Activated CD8-positive, alpha-beta memory T cell treated with anti-CD3 and anti-CD28 coated beads, Interleukin-2, amount 10 ng/mL, durations not matched to agents 7 days and 5 days (primary cell): ENCODE measurements at regions of chr2 and their contacts with region 1.

Region 1: GRCh38 chr2:231925303-231926179 is 655 bp downstream of the NPPC start:
- DNase-seq: peak; percentile 73
- ATAC-seq: peak; percentile 73
- H3K4me3 Mint-ChIP-seq: peak overlapping the region; percentile 43
- H3K27ac Mint-ChIP-seq: no peak overlapping the region
- H3K4me1 Mint-ChIP-seq: peaks cover 9% of the 10 kb centered on the region
- H3K27me3 Mint-ChIP-seq: peaks cover 53% of the 10 kb centered on the region

Region 2: GRCh38 chr2:231900486-231900942 is 25.0 kb before region 1 on chr2:
- CTCF ChIA-PET with region 1: interaction called, 12 read pairs
- DNase-seq: peak; percentile 67
- ATAC-seq: peak; percentile 75
- H3K4me3 Mint-ChIP-seq: no peak overlapping the region
- H3K27ac Mint-ChIP-seq: no peak overlapping the region
- H3K4me1 Mint-ChIP-seq: no peaks in the 10 kb centered on the region
- H3K27me3 Mint-ChIP-seq: peaks cover 8% of the 10 kb centered on the region

Region 3: DNA sequence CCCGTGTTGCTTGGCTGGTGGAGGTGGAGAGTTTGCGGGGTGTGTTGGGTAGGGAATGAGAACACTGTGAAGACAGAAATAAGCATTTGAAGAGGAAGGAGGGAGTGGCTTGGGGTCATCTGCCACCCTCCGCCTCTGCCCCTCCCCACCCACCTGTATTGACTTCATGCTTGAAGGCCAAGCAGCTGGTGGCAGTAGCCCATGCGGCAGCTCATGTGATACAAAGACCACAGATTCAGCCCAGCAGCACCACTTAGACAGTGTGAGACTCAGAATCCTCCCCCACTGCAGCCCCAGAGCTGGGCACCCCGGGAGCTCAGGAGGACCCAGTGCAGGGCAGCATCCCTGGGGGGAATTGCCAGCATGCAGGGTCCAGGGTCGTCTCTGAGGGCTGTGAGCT is 14.8 kb before region 1 on chr2:
- CTCF ChIA-PET with region 1: interaction called, 11 read pairs
- DNase-seq: no peak
- ATAC-seq: no peak
- H3K4me3 Mint-ChIP-seq: no peak overlapping the region
- H3K27ac Mint-ChIP-seq: no peak overlapping the region
- H3K4me1 Mint-ChIP-seq: peaks cover 16% of the 10 kb centered on the region
- H3K27me3 Mint-ChIP-seq: peaks cover 12% of the 10 kb centered on the region

Region 4: DNA sequence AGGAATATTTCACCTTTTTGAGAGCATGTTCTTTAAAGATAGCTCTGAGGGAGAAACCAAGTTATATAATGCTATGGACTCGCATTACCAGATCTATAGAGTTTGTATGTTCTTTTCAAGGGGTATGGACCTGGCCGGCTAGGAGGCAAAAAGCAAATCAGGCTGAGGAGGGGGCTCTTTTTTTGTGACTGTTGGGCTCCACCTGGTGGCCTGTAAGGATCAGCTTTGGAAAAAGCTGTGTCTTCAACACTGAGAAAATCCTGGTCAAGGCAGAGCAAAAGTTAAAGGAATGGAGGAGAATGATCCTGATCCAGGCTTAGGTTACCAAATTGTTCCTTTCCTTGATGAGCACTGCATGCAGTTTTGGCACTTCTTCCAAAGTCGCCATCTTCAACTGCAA is 216.5 kb after region 1 on chr2:
- CTCF ChIA-PET with region 1: interaction called, 40 read pairs
- DNase-seq: no peak
- ATAC-seq: no peak
- H3K4me3 Mint-ChIP-seq: no peak overlapping the region
- H3K27ac Mint-ChIP-seq: no peak overlapping the region
- H3K4me1 Mint-ChIP-seq: peaks cover 13% of the 10 kb centered on the region
- H3K27me3 Mint-ChIP-seq: no peaks in the 10 kb centered on the region

Region 5: DNA sequence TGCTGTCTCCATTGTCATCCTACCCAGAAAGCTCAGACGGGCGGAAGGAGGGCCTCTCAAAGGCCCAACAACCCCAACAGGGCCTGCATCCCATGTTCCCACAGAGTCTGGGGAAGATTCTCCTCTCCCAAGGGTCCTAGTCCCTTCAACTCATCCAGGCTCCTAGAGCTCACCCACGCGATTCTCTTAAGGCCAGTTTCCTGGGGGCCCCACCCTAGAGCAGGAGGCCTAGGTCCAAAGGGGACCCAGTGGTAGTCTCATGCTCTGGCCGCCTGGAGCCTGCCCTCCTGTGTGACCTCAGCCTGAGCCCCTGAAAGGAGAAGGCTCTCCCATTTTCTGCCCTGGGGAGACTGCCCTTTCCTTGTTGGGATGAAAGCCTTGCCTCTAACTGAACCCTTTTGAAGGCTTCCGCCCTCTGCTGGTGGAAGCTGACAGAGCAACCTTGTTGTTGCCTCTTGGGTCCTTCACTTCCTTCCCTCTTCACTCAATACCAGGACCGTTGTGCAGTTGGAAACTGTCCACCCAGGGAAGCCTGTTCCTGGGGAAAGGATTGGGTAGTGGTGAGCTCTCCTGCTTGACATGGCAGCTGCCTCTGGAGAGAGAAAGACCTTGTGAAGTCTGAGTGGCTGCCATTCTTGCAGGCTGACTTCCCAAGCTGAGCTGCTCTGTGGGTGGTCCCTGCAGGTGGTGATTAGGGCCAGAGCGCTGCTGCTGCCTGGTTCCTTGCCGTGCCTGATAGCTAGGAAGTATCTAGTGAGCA is 367.0 kb after region 1 on chr2:
- CTCF ChIA-PET with region 1: interaction called, 12 read pairs
- DNase-seq: peak; percentile 78
- ATAC-seq: peak; percentile 84
- H3K4me3 Mint-ChIP-seq: no peak overlapping the region
- H3K27ac Mint-ChIP-seq: no peak overlapping the region
- H3K4me1 Mint-ChIP-seq: no peaks in the 10 kb centered on the region
- H3K27me3 Mint-ChIP-seq: no peaks in the 10 kb centered on the region

Region 6: DNA sequence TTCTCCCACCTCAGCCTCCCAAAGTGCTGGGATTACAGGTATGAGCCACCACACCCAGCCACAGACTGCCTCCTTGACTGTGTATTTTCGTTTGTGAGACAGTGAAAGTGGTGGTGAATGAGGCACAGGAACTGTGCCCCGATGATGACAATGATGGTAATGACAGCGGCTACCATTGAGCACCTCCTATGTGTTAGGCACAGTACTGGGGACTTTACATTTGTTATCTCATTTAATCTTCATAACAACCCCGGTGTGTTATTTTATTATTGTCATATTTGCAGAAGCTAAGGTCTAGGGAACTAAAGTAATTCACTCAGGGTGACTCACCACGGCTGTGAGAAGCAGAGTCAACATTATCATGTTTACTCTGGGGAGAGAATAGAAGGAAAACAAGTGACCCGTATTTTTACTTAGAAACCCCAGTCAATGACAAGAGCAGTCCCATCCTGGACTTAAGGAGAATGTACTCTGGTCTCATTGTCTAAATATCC is 375.4 kb after region 1 on chr2:
- CTCF ChIA-PET with region 1: interaction called, 10 read pairs
- DNase-seq: no peak
- ATAC-seq: no peak
- H3K4me3 Mint-ChIP-seq: no peak overlapping the region
- H3K27ac Mint-ChIP-seq: no peak overlapping the region
- H3K4me1 Mint-ChIP-seq: peaks cover 16% of the 10 kb centered on the region
- H3K27me3 Mint-ChIP-seq: no peaks in the 10 kb centered on the region

Region 7: GRCh38 chr2:232315049-232315922 is 389.7 kb after region 1 on chr2:
- CTCF ChIA-PET with region 1: interaction called, 153 read pairs
- DNase-seq: peak; percentile 94
- ATAC-seq: peak; percentile 94
- H3K4me3 Mint-ChIP-seq: peak overlapping the region; percentile 46
- H3K27ac Mint-ChIP-seq: peak overlapping the region; percentile 93
- H3K4me1 Mint-ChIP-seq: peaks cover 67% of the 10 kb centered on the region
- H3K27me3 Mint-ChIP-seq: no peaks in the 10 kb centered on the region